CD4-positive, alpha-beta memory T cell (primary cell): ENCODE measurements at regions of chr5 and their contacts with region 1.

Region 1: DNA sequence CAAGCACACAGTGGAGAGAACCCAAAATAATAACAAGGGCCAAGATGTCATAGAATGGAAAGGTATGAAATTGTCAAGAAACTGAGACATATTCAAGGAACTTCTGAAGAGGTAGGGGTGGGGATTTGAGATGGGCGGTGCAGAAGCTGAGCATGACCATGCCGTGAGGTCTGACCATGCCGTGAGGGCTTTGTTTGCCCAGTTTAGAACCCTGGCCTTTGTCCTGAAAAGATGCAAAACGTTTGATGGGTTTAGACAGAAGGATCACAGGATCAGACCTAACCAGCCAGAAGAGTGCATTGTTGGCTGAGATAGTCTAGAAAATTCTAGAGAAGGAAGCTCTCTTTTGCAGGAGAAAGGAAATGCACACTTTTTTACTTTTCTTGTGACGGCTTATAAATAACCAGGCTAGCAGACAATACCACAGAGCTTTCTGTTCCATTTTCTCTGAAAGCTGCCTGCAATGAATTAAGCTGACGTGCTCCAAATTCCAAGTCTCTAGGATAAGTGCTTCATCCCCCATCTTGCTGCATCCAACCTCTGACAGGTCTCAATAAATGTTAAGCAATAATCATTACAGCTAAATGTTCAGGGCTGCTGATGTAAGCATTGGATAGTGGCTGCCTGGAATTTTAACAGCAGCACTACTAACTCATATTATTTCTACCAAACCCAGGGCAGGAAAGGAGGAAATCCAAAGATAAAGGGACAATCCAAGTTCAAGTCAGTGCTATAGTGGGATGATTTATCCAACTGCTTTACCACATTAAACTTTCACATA is 110.9 kb upstream of the IL6ST start:
- DNase-seq: no peak
- H3K4me3 ChIP-seq: no peak overlapping the region
- H3K4me3 Mint-ChIP-seq: peak overlapping the region in 5 of 8 donors; percentile 9 to 63 (median 48)
- H3K27ac ChIP-seq: no peak overlapping the region
- H3K27ac Mint-ChIP-seq: peak overlapping the region; percentile 37 to 92 (median 68)
- H3K4me1 ChIP-seq: peaks cover 53% of the 10 kb centered on the region
- H3K4me1 Mint-ChIP-seq: peaks cover 31 to 59% (median 50%) of the 10 kb centered on the region in 4 donors
- H3K27me3 ChIP-seq: no peaks in the 10 kb centered on the region
- H3K27me3 Mint-ChIP-seq: no peaks in the 10 kb centered on the region

Region 2: DNA sequence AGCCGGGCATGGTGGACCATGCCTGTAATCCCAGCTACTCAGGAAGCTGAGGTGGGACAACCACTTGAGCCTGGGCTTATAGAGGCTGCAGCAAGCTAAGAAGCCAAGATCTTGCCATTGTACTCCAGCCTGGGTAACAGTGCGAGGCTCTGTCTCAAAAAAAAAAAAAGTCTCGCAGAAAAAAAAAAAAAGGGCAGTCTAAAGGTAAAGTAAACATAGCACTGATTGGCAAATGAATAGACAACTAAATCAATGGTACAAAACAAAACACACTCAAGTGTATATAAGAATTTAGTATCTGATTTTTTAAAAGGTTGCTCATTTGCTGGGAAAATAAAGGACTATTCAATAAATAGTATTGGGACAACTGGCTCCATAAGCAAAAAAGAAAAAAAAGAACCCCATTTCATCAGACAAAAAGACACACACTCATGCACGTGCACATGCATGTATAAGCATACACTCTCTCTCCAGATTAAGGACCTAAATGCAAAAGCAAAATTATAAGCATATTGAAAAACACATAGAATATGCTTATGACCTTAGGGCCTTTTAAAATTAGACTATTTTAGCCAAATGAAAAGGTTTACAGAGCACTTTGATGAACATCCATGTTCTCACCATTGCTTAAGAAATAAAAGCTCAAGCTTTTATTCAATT is 116.6 kb before region 1 on chr5:
- CTCF ChIA-PET with region 1: interaction called, 7 read pairs
- POLR2A ChIA-PET with region 1: interaction called, 32 read pairs
- intact Hi-C with region 1: loop called (anchors 2 kb)
- DNase-seq: no peak
- H3K4me3 ChIP-seq: peak overlapping the region in 1 of 2 donors; percentile 20
- H3K4me3 Mint-ChIP-seq: peak overlapping the region; percentile 51 to 97 (median 72)
- H3K27ac ChIP-seq: no peak overlapping the region
- H3K27ac Mint-ChIP-seq: peak overlapping the region in 4 of 7 donors; percentile 27 to 93 (median 77)
- H3K4me1 ChIP-seq: peaks cover 78% of the 10 kb centered on the region
- H3K4me1 Mint-ChIP-seq: peaks cover 60 to 92% (median 75%) of the 10 kb centered on the region in 4 donors
- H3K27me3 ChIP-seq: no peaks in the 10 kb centered on the region
- H3K27me3 Mint-ChIP-seq: no peaks in the 10 kb centered on the region

Region 3: DNA sequence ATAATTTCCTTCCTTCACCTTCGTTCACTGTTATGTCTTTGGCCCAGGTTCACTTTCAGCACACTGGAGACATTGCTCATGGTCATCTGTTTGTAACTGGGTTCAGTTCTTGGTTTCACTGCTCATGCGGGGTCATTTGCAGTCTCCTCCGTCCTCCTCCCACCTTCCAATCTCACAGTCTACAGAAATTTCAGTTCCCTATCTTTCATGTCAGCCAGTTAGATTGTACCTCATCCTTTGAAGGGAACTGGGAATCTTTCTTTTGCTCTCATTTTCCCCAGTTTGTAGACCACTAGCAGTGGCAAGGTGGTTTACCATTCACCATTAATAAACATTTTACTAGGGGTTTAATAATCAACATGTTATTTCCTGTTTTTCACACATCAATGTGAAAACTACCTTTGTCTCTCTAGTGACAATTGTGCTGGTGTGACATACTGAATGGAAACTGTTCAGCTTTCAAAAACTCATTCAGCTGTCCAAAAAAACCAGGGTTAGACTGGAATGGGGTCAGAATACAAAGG is 10.1 kb before region 1 on chr5:
- CTCF ChIA-PET with region 1: interaction called, 12 read pairs
- POLR2A ChIA-PET with region 1: interaction called, 7 read pairs
- intact Hi-C with region 1: no loop called
- DNase-seq: no peak
- H3K4me3 ChIP-seq: no peak overlapping the region
- H3K4me3 Mint-ChIP-seq: peak overlapping the region in 6 of 8 donors; percentile 1 to 84 (median 12)
- H3K27ac ChIP-seq: no peak overlapping the region
- H3K27ac Mint-ChIP-seq: peak overlapping the region; percentile 23 to 91 (median 73)
- H3K4me1 ChIP-seq: peaks cover 87% of the 10 kb centered on the region
- H3K4me1 Mint-ChIP-seq: peaks cover 55 to 80% (median 66%) of the 10 kb centered on the region in 4 donors
- H3K27me3 ChIP-seq: no peaks in the 10 kb centered on the region
- H3K27me3 Mint-ChIP-seq: no peaks in the 10 kb centered on the region

Region 4: GRCh38 chr5:56126487-56127179 is 20.9 kb after region 1 on chr5:
- CTCF ChIA-PET with region 1: no interaction called
- POLR2A ChIA-PET with region 1: interaction called, 11 read pairs
- intact Hi-C with region 1: no loop called
- DNase-seq: peak in 1 of 5 donors; percentile 39
- H3K4me3 ChIP-seq: no peak overlapping the region
- H3K4me3 Mint-ChIP-seq: peak overlapping the region in 7 of 8 donors; percentile 37 to 68 (median 57)
- H3K27ac ChIP-seq: no peak overlapping the region
- H3K27ac Mint-ChIP-seq: peak overlapping the region; percentile 53 to 97 (median 83)
- H3K4me1 ChIP-seq: peaks cover 36% of the 10 kb centered on the region
- H3K4me1 Mint-ChIP-seq: peaks cover 31 to 37% (median 34%) of the 10 kb centered on the region in 4 donors
- H3K27me3 ChIP-seq: no peaks in the 10 kb centered on the region
- H3K27me3 Mint-ChIP-seq: no peaks in the 10 kb centered on the region

Region 5: DNA sequence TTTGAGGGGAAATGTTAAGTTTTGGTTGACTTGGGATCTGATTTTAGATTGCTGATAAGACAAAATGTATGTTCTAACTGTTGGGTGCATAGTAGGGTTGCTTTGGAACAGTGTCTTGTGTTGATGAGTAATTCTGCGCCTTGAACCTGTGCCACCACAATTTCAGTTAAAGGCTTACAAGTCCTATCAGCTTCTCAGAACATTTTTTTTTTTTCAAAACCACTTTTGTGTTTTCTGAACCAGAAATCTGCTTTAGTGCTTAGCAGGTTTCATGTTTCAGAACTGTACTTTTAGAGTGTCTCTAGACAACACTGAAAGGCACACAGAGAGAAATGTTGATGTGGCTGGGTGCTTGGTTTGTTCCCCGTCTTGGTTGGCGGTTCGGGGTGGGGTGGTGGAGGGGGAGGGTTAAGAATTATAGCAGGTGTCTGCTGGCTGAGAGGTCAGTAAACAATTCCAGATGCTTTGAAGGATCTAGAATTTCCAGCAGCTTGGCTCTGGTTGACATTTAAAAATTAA is 42.8 kb after region 1 on chr5:
- CTCF ChIA-PET with region 1: no interaction called
- POLR2A ChIA-PET with region 1: interaction called, 10 read pairs
- intact Hi-C with region 1: loop called (anchors 5 kb)
- DNase-seq: peak in 4 of 5 donors; percentile 42 to 51 (median 46)
- H3K4me3 ChIP-seq: no peak overlapping the region
- H3K4me3 Mint-ChIP-seq: peak overlapping the region in 7 of 8 donors; percentile 16 to 67 (median 57)
- H3K27ac ChIP-seq: no peak overlapping the region
- H3K27ac Mint-ChIP-seq: peak overlapping the region; percentile 73 to 94 (median 81)
- H3K4me1 ChIP-seq: peaks cover 80% of the 10 kb centered on the region
- H3K4me1 Mint-ChIP-seq: peaks cover 45 to 63% (median 48%) of the 10 kb centered on the region in 4 donors
- H3K27me3 ChIP-seq: no peaks in the 10 kb centered on the region
- H3K27me3 Mint-ChIP-seq: no peaks in the 10 kb centered on the region

Region 6: DNA sequence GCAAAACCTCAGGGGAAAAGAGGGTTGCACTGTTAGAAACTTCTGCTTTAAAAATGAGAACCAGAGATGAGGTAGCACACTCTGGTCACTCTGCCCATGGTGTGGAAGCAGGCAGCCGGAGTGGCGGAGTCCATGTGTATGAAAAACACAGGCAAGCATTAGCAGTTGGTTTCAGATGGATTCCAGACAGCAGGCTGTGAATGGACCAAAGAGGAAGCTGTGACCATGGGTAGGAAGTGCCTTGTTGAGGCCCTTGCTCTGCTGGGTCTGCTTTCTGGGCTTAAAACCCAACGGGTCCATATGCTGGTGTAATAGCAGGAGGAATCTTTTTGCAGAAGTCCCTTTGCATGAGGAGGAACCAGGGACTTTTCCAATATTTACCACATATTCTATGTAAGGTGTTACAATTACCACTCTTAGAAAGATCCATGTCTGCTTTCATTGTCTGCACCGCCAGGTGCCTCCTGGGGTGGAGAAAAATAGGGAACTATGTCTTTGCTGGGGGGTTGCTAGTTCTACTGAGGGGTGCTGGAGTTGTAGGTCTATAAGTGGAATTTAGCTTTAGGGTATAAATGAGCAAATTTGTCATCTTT is 50.4 kb after region 1 on chr5:
- CTCF ChIA-PET with region 1: no interaction called
- POLR2A ChIA-PET with region 1: interaction called, 4 read pairs
- intact Hi-C with region 1: loop called (anchors 2 kb)
- DNase-seq: no peak
- H3K4me3 ChIP-seq: no peak overlapping the region
- H3K4me3 Mint-ChIP-seq: peak overlapping the region; percentile 34 to 89 (median 60)
- H3K27ac ChIP-seq: peak overlapping the region; percentile 0
- H3K27ac Mint-ChIP-seq: peak overlapping the region; percentile 90 to 95 (median 91)
- H3K4me1 ChIP-seq: peaks cover 70% of the 10 kb centered on the region
- H3K4me1 Mint-ChIP-seq: peaks cover 51 to 88% (median 72%) of the 10 kb centered on the region in 4 donors
- H3K27me3 ChIP-seq: no peaks in the 10 kb centered on the region
- H3K27me3 Mint-ChIP-seq: no peaks in the 10 kb centered on the region